Mammary epithelial cell (primary cell): ENCODE measurements at regions of chr1 and their contacts with region 1.

Region 1: DNA sequence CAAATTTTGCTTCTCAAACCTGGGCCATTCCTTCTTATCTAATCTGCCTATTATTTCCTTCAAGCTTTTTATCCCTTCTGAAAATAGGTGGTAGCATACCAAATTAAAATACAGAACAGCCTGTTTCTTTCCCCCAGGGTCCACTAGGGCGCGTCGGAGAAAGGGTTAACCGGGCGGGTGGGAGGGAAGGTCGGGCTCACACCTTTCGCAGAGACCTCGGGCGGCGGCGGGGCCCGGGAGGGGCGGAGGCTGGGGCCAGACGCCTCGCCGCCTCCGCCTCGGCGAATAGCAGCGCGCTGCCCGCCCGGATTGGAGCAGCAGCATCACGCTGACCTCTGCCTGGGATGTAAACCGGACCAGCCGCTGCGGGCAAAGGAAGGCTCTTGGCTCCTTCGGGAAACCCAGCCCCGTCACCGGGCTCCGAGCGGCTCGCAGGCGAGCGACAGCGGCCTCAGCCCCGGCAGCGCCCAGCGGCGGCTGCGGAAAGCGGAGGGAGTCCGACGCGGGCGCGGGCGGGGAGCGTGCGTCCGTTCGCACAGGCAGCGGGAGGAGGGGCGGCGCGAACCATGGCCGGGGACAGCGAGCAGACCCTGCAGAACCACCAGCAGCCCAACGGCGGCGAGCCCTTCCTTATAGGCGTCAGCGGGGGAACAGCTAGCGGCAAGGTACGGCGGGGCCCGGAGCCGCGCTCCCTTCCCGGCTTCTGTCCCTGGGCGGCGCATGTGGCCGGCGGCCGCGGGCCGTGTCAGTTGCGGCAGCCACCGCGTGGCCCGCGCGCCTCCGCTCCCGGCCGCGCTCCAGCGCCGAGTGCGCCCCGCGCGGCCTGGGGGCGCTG is at the start of gene UCK2:
- DNase-seq: peak; percentile 81
- H3K4me3 ChIP-seq: peak within 1 kb of the TSS; percentile 81 to 89 (median 85)
- H3K27ac ChIP-seq: peak within 1 kb of the TSS; percentile 85
- H3K4me1 ChIP-seq: peaks cover 13% of the 10 kb centered on the region
- H3K27me3 ChIP-seq: no peaks in the 10 kb centered on the region
- CTCF ChIP-seq: peak in 1 of 2 donors; percentile 0
- total RNA-seq, gene UCK2: 85.2 to 111 TPM

Region 2: DNA sequence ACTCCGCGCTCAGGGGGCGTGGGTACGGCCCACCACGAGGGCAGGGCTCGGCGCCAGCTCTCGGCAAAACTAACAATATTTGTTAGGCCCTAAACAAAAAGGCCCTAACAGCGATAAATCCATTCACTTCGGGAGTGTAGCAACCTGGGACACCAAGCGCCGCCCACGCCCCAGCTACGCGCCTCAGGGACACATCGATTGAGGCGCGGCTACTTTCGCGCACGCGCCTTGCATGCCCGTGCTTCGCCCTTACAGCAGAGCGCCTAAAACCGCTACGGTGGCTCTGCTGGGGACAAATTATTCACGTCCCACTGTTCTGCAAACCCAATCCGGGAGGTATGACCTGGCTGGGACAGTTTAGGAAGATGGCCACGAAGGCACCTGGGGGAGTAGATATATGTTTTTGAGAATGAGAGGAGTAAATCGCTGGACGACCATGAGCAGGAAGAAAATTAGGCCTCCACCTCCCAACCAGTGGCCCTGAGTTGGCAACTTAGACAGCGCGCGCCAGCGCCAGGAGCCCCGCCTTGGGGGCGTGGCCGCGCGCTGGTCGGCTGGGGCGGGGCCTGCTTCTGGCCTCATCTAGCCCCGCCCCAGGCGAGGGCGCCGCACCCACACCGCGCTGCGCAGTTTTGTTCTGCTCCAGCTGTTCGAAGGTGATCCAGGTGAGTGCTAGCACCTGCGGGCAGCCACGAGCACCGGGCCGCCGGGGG is 196.7 kb before region 1 on chr1 and contains the start of gene MGST3:
- CTCF ChIA-PET with region 1: no interaction called
- dilution Hi-C with region 1: no loop called
- in situ Hi-C with region 1: no loop called
- intact Hi-C with region 1: loop called (anchors 2 kb)
- DNase-seq: peak; percentile 94
- H3K4me3 ChIP-seq: peak within 1 kb of the TSS; percentile 56 to 83 (median 80)
- H3K27ac ChIP-seq: peak within 1 kb of the TSS; percentile 75
- H3K4me1 ChIP-seq: peaks cover 18% of the 10 kb centered on the region
- H3K27me3 ChIP-seq: no peaks in the 10 kb centered on the region
- CTCF ChIP-seq: no peak
- total RNA-seq, gene MGST3: 96.0 to 130 TPM

Region 3: GRCh38 chr1:165768513-165769394 is 58.7 kb before region 1 on chr1 and contains the start of gene TMCO1:
- CTCF ChIA-PET with region 1: no interaction called
- dilution Hi-C with region 1: loop called (anchors 5 kb)
- in situ Hi-C with region 1: loop called in 1 of 2 experiments (anchors 10 kb)
- intact Hi-C with region 1: loop called (anchors 1 kb)
- DNase-seq: peak; percentile 97
- H3K4me3 ChIP-seq: peak within 1 kb of the TSS; percentile 66 to 87 (median 82)
- H3K27ac ChIP-seq: peak within 1 kb of the TSS; percentile 88
- H3K4me1 ChIP-seq: peaks cover 27% of the 10 kb centered on the region
- H3K27me3 ChIP-seq: no peaks in the 10 kb centered on the region
- CTCF ChIP-seq: peak in 1 of 2 donors; percentile 33
- total RNA-seq, gene TMCO1: 79.0 to 80.9 TPM

Region 4: GRCh38 chr1:165871311-165872067 is 44.0 kb after region 1 on chr1:
- CTCF ChIA-PET with region 1: no interaction called
- dilution Hi-C with region 1: no loop called
- in situ Hi-C with region 1: no loop called
- intact Hi-C with region 1: loop called (anchors 2 kb)
- DNase-seq: peak; percentile 49
- H3K4me3 ChIP-seq: no peak overlapping the region
- H3K27ac ChIP-seq: no peak overlapping the region
- H3K4me1 ChIP-seq: peaks cover 20% of the 10 kb centered on the region
- H3K27me3 ChIP-seq: no peaks in the 10 kb centered on the region
- CTCF ChIP-seq: peak in 1 of 2 donors; percentile 57

Region 5: GRCh38 chr1:165914136-165914798 is 86.8 kb after region 1 on chr1:
- CTCF ChIA-PET with region 1: interaction called, 8 read pairs
- dilution Hi-C with region 1: no loop called
- in situ Hi-C with region 1: no loop called
- intact Hi-C with region 1: loop called (anchors 1 kb)
- DNase-seq: peak; percentile 62
- H3K4me3 ChIP-seq: no peak overlapping the region
- H3K27ac ChIP-seq: no peak overlapping the region
- H3K4me1 ChIP-seq: peaks cover 4% of the 10 kb centered on the region
- H3K27me3 ChIP-seq: no peaks in the 10 kb centered on the region
- CTCF ChIP-seq: peak; percentile 81 to 88

Region 6: DNA sequence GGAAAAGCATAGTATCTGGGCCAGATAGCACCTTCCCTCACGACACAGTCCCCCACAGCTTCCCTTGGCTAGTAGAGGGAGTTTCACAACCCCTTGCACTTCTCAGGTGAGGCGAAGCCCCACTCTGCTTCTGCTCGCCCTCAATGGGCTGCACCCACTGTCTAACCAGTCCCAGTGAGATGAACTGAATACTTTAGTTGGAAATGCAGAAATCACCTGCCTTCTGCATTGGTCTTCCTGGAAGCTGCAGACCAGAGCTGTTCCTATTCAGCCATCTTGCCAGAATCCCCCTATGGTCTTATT is 582.5 kb after region 1 on chr1:
- CTCF ChIA-PET with region 1: no interaction called
- dilution Hi-C with region 1: no loop called
- in situ Hi-C with region 1: no loop called
- intact Hi-C with region 1: no loop called
- DNase-seq: no peak
- H3K4me3 ChIP-seq: no peak overlapping the region
- H3K27ac ChIP-seq: no peak overlapping the region
- H3K4me1 ChIP-seq: no peaks in the 10 kb centered on the region
- H3K27me3 ChIP-seq: no peaks in the 10 kb centered on the region
- CTCF ChIP-seq: no peak